ENCODE measurements at regions of chr7 and their contacts with region 1.

Region 1: GRCh38 chr7:134954197-134955082 is 31.9 kb upstream of the AGBL3 start:
- DNase-seq: no peak
- H3K4me3 Mint-ChIP-seq: no peak overlapping the region
- H3K27ac Mint-ChIP-seq: no peak overlapping the region
- H3K4me1 Mint-ChIP-seq: no peaks in the 10 kb centered on the region
- H3K27me3 Mint-ChIP-seq: no peaks in the 10 kb centered on the region

Region 2: DNA sequence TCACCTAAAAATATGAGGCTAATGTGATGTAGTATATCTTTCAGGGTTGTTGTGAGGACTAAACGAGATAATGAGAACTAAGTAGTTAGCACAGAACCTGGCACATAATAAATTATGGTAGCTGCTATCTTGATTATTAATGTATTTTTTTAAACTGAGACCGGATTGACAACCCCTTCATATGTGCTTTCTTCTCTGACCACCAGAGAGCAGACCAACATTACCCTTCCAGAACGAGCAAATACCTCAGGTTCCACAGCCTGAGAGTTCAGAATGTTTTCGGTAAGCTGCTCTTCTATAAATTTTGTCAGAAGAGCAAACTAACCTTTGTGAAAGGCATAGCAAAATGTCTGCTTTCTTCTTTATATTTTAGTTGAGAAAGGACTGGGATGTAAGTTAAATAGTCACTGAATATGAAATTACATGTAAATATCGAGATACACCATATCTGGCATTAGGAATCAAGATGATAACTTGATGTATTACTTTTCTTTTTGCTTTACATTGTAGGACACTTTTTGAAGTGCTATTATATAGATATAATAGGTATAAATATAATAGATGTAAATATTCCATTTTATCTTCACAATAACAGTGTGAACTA is 321.4 kb before region 1 on chr7:
- CTCF ChIA-PET with region 1: interaction called, 47 read pairs
- POLR2A ChIA-PET with region 1: no interaction called
- intact Hi-C with region 1: loop called (anchors 1 kb)
- DNase-seq: peak; percentile 29
- H3K4me3 Mint-ChIP-seq: no peak overlapping the region
- H3K27ac Mint-ChIP-seq: no peak overlapping the region
- H3K4me1 Mint-ChIP-seq: peaks cover 23% of the 10 kb centered on the region
- H3K27me3 Mint-ChIP-seq: peaks cover 13% of the 10 kb centered on the region

Region 3: GRCh38 chr7:134690016-134690415 is 264.4 kb before region 1 on chr7:
- CTCF ChIA-PET with region 1: interaction called, 14 read pairs
- POLR2A ChIA-PET with region 1: no interaction called
- intact Hi-C with region 1: loop called (anchors 1 kb)
- DNase-seq: no peak
- H3K4me3 Mint-ChIP-seq: no peak overlapping the region
- H3K27ac Mint-ChIP-seq: no peak overlapping the region
- H3K4me1 Mint-ChIP-seq: no peaks in the 10 kb centered on the region
- H3K27me3 Mint-ChIP-seq: no peaks in the 10 kb centered on the region

Region 4: GRCh38 chr7:134730411-134730829 is 224.0 kb before region 1 on chr7:
- CTCF ChIA-PET with region 1: no interaction called
- POLR2A ChIA-PET with region 1: no interaction called
- intact Hi-C with region 1: no loop called
- DNase-seq: no peak
- H3K4me3 Mint-ChIP-seq: no peak overlapping the region
- H3K27ac Mint-ChIP-seq: peak overlapping the region; percentile 64
- H3K4me1 Mint-ChIP-seq: peaks cover 27% of the 10 kb centered on the region
- H3K27me3 Mint-ChIP-seq: no peaks in the 10 kb centered on the region

Region 5: DNA sequence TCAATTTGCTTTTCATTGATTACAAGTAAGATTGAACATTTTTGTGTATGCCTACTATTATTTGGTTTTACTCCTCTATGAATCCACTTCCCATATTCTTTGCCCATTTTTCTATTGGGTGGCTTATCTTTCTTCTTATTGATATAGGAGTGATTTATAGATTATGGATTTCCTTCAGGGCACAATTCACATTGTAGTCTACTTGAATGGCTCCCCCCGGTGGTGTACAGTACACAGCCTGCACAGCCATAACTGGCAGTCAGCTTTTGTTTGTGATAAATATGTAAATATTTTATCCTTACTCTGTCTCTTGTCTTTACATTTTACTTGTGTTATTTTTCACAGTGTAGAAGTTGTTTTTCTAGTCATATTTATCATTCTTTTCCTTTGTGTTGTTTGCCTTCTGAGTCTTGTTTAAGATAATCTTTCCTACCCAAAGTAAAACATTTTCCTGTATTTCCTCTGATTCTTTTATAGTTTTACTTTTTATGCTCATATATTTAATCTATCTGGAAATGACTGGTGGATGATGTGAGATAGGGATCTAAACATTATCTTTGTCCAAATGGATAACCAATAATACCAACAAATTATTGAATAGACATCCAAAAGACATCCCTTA is 198.9 kb before region 1 on chr7:
- CTCF ChIA-PET with region 1: no interaction called
- POLR2A ChIA-PET with region 1: no interaction called
- intact Hi-C with region 1: loop called (anchors 1 kb)
- DNase-seq: peak; percentile 59
- H3K4me3 Mint-ChIP-seq: no peak overlapping the region
- H3K27ac Mint-ChIP-seq: no peak overlapping the region
- H3K4me1 Mint-ChIP-seq: peaks cover 5% of the 10 kb centered on the region
- H3K27me3 Mint-ChIP-seq: no peaks in the 10 kb centered on the region

Region 6: DNA sequence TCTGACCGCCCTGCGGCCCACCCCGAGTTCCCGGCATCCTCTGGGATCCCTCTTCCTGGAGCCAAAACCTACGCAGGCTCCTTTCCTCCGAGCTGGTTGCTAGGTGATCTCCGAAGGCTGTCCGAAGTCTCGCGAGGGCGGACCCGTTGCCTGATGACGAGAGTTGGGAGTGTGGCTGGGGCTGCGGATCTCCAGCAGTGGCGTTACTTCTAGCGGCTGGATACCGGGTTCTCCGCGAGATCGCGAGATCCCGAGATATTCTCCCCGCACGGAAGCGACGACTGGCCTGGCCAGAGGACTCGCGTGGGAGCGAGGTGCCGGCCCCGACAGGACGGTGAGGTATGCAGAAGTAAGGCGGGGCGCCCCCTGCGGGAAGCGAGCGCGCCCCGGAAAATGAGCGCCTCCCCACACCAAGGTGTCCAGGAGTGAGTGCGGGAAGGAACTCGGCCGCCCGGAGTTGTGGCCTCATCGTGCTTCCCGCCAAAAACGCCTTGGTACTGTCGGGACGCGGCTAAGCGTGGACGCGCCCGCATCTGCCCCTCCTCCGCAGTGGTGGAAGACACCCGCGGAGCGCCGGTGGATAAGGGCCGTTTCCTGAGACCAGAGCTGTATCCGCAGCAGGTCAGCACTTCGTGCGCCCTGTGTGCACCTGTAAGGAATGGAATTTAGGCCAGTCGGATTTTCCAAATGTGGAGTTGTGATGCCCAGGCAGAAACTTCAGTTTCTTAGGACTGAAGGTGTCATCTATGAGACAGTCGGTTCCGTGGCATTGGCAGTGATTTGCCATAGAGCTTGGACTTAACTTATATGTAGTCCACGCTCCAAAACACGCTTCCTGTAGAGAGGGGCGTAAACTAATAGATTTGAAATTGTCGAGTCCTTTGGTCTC is 32.2 kb after region 1 on chr7 and contains the start of gene AGBL3:
- CTCF ChIA-PET with region 1: interaction called, 5 read pairs
- POLR2A ChIA-PET with region 1: no interaction called
- intact Hi-C with region 1: loop called (anchors 2 kb)
- DNase-seq: peak; percentile 95
- H3K4me3 Mint-ChIP-seq: peak within 1 kb of the TSS; percentile 95
- H3K27ac Mint-ChIP-seq: peak within 1 kb of the TSS; percentile 95
- H3K4me1 Mint-ChIP-seq: peaks cover 35% of the 10 kb centered on the region
- H3K27me3 Mint-ChIP-seq: no peaks in the 10 kb centered on the region
- total RNA-seq, gene AGBL3: 3.3 to 3.4 TPM

Measured in activated CD4-positive, alpha-beta memory T cell treated with anti-CD3 and anti-CD28 coated beads for 36 hours (primary cell).